ENCODE measurements at regions of chr12 and their contacts with region 1.

Region 1: DNA sequence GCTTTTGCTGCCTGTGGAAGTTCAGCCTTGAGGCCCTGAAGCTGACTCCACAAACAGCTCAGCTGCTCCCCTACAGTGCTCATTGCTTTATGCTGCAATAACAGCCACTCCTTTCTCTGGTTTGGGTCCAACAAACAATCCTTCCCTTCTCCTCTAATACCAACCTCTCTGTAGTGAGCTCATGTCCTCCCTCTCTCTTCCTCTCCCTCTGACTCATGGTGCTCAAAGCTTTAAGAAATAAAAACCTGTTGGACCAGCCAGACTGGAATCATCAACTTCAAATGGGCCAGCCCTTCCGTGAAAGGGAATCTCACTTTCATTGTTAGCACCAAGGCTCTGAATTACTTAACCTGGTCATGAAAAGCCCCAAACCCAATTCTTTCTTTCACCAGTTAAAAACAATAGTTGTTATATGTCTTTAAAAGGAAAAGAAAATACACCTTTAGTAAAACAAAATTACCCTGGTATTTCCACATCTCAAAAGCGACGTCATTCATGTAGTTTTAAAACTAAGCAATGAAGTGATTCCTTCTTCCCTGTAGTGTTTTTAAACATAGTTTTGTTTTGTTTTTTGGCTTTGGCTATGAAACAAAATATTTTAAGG is 126.4 kb downstream of the DUSP6 start:
- DNase-seq: no peak
- H3K4me3 Mint-ChIP-seq: peak overlapping the region; percentile 70
- H3K27ac Mint-ChIP-seq: peak overlapping the region; percentile 100
- H3K4me1 Mint-ChIP-seq: peaks cover 67% of the 10 kb centered on the region
- H3K27me3 Mint-ChIP-seq: no peaks in the 10 kb centered on the region

Region 2: DNA sequence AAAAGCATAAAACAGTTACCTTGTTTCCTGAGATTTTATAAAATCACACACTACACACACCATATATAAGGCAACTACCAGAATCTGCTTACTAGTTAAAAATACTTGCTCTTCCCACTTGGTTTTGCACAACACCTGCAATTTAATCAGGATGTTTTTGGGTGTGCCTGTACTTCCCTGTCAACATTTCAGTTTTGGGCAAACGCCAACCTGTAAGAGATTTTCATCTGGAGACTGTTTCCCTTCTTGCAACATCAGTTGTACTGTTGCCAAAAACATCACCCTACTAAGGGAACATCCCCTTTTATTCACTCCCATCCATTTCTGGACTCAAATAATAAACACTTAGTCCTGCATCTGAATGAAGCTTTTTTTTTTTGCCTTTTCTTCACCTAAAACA is 45.9 kb before region 1 on chr12:
- intact Hi-C with region 1: loop called (anchors 1 kb)
- DNase-seq: no peak
- H3K4me3 Mint-ChIP-seq: peak overlapping the region; percentile 50
- H3K27ac Mint-ChIP-seq: peak overlapping the region; percentile 86
- H3K4me1 Mint-ChIP-seq: peaks cover 71% of the 10 kb centered on the region
- H3K27me3 Mint-ChIP-seq: no peaks in the 10 kb centered on the region

Region 3: GRCh38 chr12:89261982-89262381 is 36.1 kb after region 1 on chr12:
- intact Hi-C with region 1: loop called (anchors 1 kb)
- DNase-seq: no peak
- H3K4me3 Mint-ChIP-seq: no peak overlapping the region
- H3K27ac Mint-ChIP-seq: peak overlapping the region; percentile 28
- H3K4me1 Mint-ChIP-seq: peaks cover 52% of the 10 kb centered on the region
- H3K27me3 Mint-ChIP-seq: no peaks in the 10 kb centered on the region

Region 4: DNA sequence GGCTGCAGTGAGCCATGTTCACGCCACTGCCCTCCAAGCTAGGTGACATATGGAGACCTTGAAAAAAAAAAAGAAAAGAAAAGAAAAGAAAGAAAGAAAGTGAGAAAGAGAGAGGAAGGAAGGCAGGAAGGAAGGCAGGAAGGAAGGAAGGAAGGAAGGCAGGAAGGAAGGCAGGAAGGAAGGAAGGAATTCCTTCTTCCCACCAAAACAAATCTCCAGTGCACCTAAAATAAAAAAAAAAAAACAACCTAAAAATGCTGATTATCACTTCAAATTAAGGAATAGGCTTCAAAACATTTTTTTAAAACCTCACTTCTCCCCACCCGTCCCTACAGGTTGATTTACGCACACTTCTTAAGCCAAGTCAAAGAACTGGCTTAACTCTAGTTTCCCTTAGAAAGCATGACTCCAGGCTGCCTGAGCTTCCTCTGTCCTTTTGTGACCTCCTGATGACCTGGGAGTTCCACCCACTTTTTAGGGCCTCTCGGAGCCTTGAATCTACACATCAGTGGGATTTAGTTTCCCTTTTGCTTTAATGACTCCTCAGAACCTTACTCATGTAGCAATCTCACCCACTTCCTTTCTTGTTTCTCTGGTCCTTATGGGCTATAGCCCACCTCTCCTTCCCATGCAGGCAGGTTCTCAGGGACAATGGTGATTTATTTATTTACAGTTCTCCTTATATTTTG is 107.8 kb after region 1 on chr12:
- intact Hi-C with region 1: loop called (anchors 5 kb)
- DNase-seq: peak; percentile 47
- H3K4me3 Mint-ChIP-seq: peak overlapping the region; percentile 54
- H3K27ac Mint-ChIP-seq: peak overlapping the region; percentile 83
- H3K4me1 Mint-ChIP-seq: peaks cover 41% of the 10 kb centered on the region
- H3K27me3 Mint-ChIP-seq: no peaks in the 10 kb centered on the region

Measured in activated T-helper 2 cell treated with anti-CD3 and anti-CD28 coated beads, Interferon-gamma antibody, Interleukin-2, Interleukin-4, amounts not matched to agents 10 μg/mL and 5 μg/mL and 100 μg/mL, durations not matched to agents 14 hours and 24 hours and 36 hours (primary cell).